CD14-positive monocyte (primary cell): ENCODE measurements at regions of chr17 and their contacts with region 1.

Region 1: GRCh38 chr17:29645515-29646051 is 22.9 kb upstream of the CORO6 start:
- DNase-seq: no peak
- H3K4me3 ChIP-seq: no peak overlapping the region
- H3K4me3 Mint-ChIP-seq: no peak overlapping the region
- H3K27ac ChIP-seq: peak overlapping the region in 1 of 2 donors; percentile 42
- H3K27ac Mint-ChIP-seq: peak overlapping the region in 5 of 7 donors; percentile 9 to 64 (median 37)
- H3K4me1 ChIP-seq: no peaks in the 10 kb centered on the region
- H3K4me1 Mint-ChIP-seq: peaks cover 8% of the 10 kb centered on the region
- H3K27me3 ChIP-seq: no peaks in the 10 kb centered on the region
- H3K27me3 Mint-ChIP-seq: no peaks in the 10 kb centered on the region
- CTCF ChIP-seq: no peak

Region 2: GRCh38 chr17:29504711-29505110 is 140.9 kb before region 1 on chr17:
- intact Hi-C with region 1: no loop called
- DNase-seq: no peak
- H3K4me3 ChIP-seq: no peak overlapping the region
- H3K4me3 Mint-ChIP-seq: no peak overlapping the region
- H3K27ac ChIP-seq: peak overlapping the region in 1 of 2 donors; percentile 23
- H3K27ac Mint-ChIP-seq: no peak overlapping the region
- H3K4me1 ChIP-seq: no peaks in the 10 kb centered on the region
- H3K4me1 Mint-ChIP-seq: peaks cover 6% of the 10 kb centered on the region
- H3K27me3 ChIP-seq: no peaks in the 10 kb centered on the region
- H3K27me3 Mint-ChIP-seq: no peaks in the 10 kb centered on the region
- CTCF ChIP-seq: no peak

Region 3: DNA sequence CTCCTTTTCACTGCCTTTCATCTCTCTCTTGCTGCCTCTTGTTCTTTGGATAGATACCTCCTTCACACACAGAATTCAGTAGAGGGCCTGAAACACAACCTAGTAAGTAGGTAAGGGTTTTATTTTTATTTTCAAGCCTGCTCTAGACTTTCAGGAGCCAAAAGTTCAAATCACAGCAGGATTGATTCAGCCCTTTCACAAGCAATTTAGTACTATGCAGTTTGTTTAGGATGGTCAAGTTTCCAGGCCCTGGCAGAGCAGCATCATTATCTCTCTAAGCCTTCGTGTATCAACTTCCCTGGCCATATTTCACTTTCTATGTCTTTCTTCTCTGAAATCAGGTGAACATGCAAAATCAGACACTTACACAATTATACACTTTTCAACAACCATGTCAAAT is 126.0 kb after region 1 on chr17:
- intact Hi-C with region 1: loop called (anchors 5 to 10 kb)
- DNase-seq: no peak
- H3K4me3 ChIP-seq: no peak overlapping the region
- H3K4me3 Mint-ChIP-seq: no peak overlapping the region
- H3K27ac ChIP-seq: no peak overlapping the region
- H3K27ac Mint-ChIP-seq: no peak overlapping the region
- H3K4me1 ChIP-seq: no peaks in the 10 kb centered on the region
- H3K4me1 Mint-ChIP-seq: peaks cover 10% of the 10 kb centered on the region
- H3K27me3 ChIP-seq: no peaks in the 10 kb centered on the region
- H3K27me3 Mint-ChIP-seq: peaks cover 0 to 1% (median 0%) of the 10 kb centered on the region in 3 donors
- CTCF ChIP-seq: no peak

Region 4: GRCh38 chr17:29931231-29931932 is 285.8 kb after region 1 on chr17:
- intact Hi-C with region 1: loop called in 1 of 2 experiments (anchors 10 kb)
- DNase-seq: peak; percentile 52 to 84 (median 75)
- H3K4me3 ChIP-seq: peak overlapping the region; percentile 72 to 92 (median 91)
- H3K4me3 Mint-ChIP-seq: no peak overlapping the region
- H3K27ac ChIP-seq: no peak overlapping the region
- H3K27ac Mint-ChIP-seq: no peak overlapping the region
- H3K4me1 ChIP-seq: peaks cover 23 to 32% of the 10 kb centered on the region in 2 donors
- H3K4me1 Mint-ChIP-seq: peaks cover 25% of the 10 kb centered on the region
- H3K27me3 ChIP-seq: no peaks in the 10 kb centered on the region
- H3K27me3 Mint-ChIP-seq: peaks cover 0 to 5% (median 0%) of the 10 kb centered on the region in 3 donors
- CTCF ChIP-seq: peak; percentile 94